Vagina (tissue), 2 donors: ENCODE measurements at regions of chr1 and their contacts with region 1.

Region 1: GRCh38 chr1:237358555-237358954 is 316.6 kb downstream of the RYR2 start:
- DNase-seq: no peak
- H3K4me3 ChIP-seq: no peak overlapping the region
- H3K27ac ChIP-seq: no peak overlapping the region
- H3K4me1 ChIP-seq: no peaks in the 10 kb centered on the region
- H3K27me3 ChIP-seq: no peaks in the 10 kb centered on the region
- CTCF ChIP-seq: no peak
- POLR2A ChIP-seq: no peak

Region 2: DNA sequence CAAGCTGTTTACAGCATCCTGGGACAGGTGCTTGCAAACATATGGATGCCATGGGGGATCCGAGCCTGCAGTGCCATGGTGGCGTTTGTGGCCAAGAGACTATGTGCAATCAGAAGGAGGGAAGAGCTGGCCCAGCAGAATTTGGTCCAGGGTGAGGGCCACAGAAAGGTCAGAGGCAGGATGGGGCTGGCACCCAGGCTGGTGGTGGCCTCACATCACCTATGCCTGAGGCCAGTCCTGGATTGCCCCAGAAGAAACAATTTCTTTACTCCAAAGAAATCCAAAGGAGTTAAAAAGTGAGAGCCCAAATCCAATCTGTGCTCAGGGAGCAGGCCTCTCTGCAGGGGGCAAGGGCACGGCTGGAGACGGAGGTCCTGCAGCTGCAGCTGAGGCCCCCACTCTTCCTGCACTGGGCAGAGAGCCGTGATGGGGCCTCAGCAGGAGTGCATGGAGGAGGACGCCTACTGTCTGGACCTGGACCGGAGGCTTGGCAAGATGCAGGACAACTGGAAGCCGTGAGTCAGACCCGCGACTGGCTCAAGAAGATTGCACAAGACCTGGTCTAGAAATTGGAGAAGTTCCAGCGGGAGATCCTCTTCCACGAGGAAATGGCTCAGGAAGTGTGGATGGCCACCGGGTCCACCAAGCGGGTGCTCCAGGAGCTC is 153.0 kb before region 1 on chr1:
- intact Hi-C with region 1: no loop called
- DNase-seq: no peak
- H3K4me3 ChIP-seq: no peak overlapping the region
- H3K27ac ChIP-seq: peak overlapping the region; percentile 5
- H3K4me1 ChIP-seq: no peaks in the 10 kb centered on the region
- H3K27me3 ChIP-seq: no peaks in the 10 kb centered on the region
- CTCF ChIP-seq: no peak
- POLR2A ChIP-seq: no peak

Region 3: DNA sequence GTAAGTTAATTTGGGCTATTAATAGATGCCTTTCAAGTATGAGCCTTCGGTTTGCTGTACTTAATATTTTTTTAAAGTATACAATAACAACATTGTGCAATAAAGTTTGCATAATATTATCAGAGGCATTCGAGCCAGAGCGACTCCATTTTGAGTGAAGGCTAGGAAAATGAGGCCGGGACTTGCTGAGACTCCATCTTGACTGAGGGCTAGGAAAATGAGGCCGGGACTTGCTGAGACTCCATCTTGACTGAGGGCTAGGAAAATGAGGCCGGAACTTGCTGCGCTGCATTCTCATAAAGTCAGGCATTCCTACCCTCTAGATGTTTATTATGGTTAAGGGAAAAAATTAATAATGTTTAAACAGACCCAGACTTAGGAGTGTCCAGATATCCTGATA is 50.8 kb before region 1 on chr1:
- intact Hi-C with region 1: loop called (anchors 2 kb)
- DNase-seq: no peak
- H3K4me3 ChIP-seq: no peak overlapping the region
- H3K27ac ChIP-seq: no peak overlapping the region
- H3K4me1 ChIP-seq: no peaks in the 10 kb centered on the region
- H3K27me3 ChIP-seq: no peaks in the 10 kb centered on the region
- CTCF ChIP-seq: no peak
- POLR2A ChIP-seq: no peak

Region 4: GRCh38 chr1:238710697-238711096 is 1352.1 kb after region 1 on chr1:
- intact Hi-C with region 1: loop called (anchors 5 kb)
- DNase-seq: no peak
- H3K4me3 ChIP-seq: no peak overlapping the region
- H3K27ac ChIP-seq: no peak overlapping the region
- H3K4me1 ChIP-seq: no peaks in the 10 kb centered on the region
- H3K27me3 ChIP-seq: no peaks in the 10 kb centered on the region
- CTCF ChIP-seq: no peak
- POLR2A ChIP-seq: no peak